PC-9 (cell line): ENCODE measurements at regions of chr1 and their contacts with region 1.

Region 1: DNA sequence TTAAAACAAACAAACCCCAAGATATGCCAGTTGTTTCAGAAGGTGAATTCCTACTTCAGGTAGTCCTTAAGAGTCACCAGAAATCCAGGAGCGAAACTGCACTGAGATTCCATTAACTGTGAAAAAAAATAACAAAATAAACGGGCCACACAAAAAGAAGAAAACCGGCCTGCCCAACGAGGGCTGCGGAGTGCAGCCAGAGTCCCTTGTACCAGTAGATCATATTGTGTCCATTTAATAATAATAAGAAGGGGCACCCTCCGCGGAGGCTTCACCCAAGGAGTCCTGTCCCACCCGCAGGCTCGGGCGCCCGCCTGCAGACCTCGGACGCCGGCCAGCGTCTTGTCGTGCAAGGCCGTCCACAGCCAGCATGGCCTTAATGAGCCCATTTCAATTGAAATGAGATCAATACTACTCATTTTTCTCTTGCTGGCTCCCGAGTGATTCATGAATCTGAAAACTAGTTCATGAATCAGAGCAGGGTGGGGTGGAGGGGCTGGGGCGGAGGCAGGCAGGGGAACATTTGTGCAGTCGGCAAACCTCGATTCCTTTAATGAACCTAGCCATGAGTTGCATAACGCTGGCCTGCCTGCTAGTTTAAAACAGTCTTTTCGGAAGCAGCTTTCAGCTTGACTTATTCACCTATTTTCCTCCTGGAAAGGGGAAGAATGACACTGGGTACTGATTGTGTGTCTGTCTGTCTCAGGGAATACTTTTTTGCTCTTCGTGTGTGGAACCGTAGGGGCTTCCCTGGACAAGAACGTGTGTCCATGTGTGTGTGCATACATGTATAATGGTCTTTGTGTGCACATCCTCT is 113.1 kb upstream of the IRF2BP2 start:
- DNase-seq: peak in 1 of 2 experiments; percentile 90
- H3K4me3 ChIP-seq: peak overlapping the region; percentile 53
- H3K27ac ChIP-seq: peak overlapping the region; percentile 97
- H3K4me1 ChIP-seq: peaks cover 71% of the 10 kb centered on the region
- H3K27me3 ChIP-seq: no peaks in the 10 kb centered on the region
- CTCF ChIP-seq: no peak

Region 2: GRCh38 chr1:234373064-234373958 is 349.8 kb before region 1 on chr1 and contains the start of gene COA6:
- CTCF ChIA-PET with region 1: no interaction called
- POLR2A ChIA-PET with region 1: no interaction called
- intact Hi-C with region 1: no loop called
- DNase-seq: peak; percentile 90 to 92
- H3K4me3 ChIP-seq: peak within 1 kb of the TSS; percentile 98
- H3K27ac ChIP-seq: peak within 1 kb of the TSS; percentile 99
- H3K4me1 ChIP-seq: peaks cover 46% of the 10 kb centered on the region
- H3K27me3 ChIP-seq: no peaks in the 10 kb centered on the region
- CTCF ChIP-seq: no peak
- total RNA-seq, gene COA6: 73.8 and 77.1 TPM in 2 replicates

Region 3: GRCh38 chr1:234656856-234657654 is 66.1 kb before region 1 on chr1:
- CTCF ChIA-PET with region 1: interaction called, 4 read pairs
- POLR2A ChIA-PET with region 1: interaction called, 14 read pairs
- intact Hi-C with region 1: loop called (anchors 1 kb)
- DNase-seq: peak; percentile 50 to 95
- H3K4me3 ChIP-seq: peak overlapping the region; percentile 69
- H3K27ac ChIP-seq: peak overlapping the region; percentile 99
- H3K4me1 ChIP-seq: peaks cover 59% of the 10 kb centered on the region
- H3K27me3 ChIP-seq: no peaks in the 10 kb centered on the region
- CTCF ChIP-seq: no peak

Region 4: DNA sequence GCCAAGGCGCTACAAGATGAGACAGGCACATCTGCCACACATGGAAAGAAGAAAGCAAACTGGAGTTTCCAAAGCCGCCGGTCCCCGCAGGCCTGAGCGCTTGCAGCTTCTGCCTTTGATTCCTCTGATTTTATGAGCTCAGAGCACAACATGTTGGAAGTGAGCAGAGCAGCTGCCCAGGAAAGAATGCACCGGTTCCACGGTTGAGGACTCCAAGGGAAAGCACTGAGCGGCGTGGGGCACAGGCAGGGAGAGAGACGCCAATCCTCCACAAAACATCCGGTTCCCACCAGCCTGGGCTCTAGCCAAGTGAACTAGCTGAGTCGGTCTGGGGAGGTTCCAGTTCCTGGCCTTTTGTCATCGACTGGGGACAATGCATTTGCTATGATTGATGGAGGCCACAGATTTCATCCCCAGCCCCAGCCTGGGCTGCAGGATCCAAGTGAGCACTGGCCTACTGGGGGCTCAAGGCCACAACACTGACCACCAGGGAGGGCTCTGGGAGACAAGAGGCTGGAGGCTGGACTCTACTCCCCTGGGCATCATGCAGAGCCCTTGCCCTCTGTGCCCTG is 139.9 kb after region 1 on chr1:
- CTCF ChIA-PET with region 1: no interaction called
- POLR2A ChIA-PET with region 1: interaction called, 5 read pairs
- intact Hi-C with region 1: loop called (anchors 1 kb)
- DNase-seq: no peak
- H3K4me3 ChIP-seq: no peak overlapping the region
- H3K27ac ChIP-seq: no peak overlapping the region
- H3K4me1 ChIP-seq: peaks cover 56% of the 10 kb centered on the region
- H3K27me3 ChIP-seq: no peaks in the 10 kb centered on the region
- CTCF ChIP-seq: no peak

Region 5: GRCh38 chr1:234912548-234913277 is 189.6 kb after region 1 on chr1:
- CTCF ChIA-PET with region 1: no interaction called
- POLR2A ChIA-PET with region 1: no interaction called
- intact Hi-C with region 1: loop called (anchors 1 kb)
- DNase-seq: peak in 1 of 2 experiments; percentile 89
- H3K4me3 ChIP-seq: no peak overlapping the region
- H3K27ac ChIP-seq: no peak overlapping the region
- H3K4me1 ChIP-seq: no peaks in the 10 kb centered on the region
- H3K27me3 ChIP-seq: no peaks in the 10 kb centered on the region
- CTCF ChIP-seq: no peak

Region 6: DNA sequence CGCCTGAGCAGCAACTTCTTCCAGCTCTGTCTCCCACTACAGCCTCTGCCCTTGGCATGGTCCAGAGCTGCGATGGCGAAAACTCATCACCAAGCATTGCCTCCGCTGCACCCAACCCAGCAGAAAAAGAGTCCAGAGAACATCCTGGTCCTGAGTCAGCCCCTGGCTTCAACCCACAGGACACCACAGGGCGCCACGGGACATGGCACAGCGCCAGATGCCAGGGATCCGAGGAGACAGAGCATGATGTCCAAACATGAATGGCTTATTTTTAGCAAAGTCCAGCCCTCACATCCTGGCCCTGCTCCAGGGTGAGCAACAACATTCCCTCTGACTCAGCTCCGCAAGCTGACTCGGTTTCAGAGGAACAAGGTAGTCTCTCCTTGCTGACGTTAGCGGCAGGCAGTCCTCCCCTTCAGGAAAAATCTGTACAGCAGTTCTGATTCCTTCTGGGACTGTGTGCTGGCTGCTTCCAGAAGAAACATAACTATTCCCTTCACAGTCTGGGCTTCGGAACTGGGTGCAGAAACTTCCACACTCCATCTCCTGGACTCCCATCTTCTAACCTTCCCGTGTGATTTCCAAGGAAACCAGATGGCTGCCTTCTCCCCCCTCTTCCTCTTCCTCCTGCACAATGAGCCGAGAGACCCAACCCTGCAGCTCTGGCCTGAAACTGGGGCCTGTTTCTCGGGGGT is 274.2 kb after region 1 on chr1:
- CTCF ChIA-PET with region 1: interaction called, 4 read pairs
- POLR2A ChIA-PET with region 1: no interaction called
- intact Hi-C with region 1: loop called (anchors 1 kb)
- DNase-seq: peak; percentile 99 to 100
- H3K4me3 ChIP-seq: peak overlapping the region; percentile 45
- H3K27ac ChIP-seq: peak overlapping the region; percentile 100
- H3K4me1 ChIP-seq: peaks cover 34% of the 10 kb centered on the region
- H3K27me3 ChIP-seq: no peaks in the 10 kb centered on the region
- CTCF ChIP-seq: no peak